ENCODE measurements at regions of chr16 and their contacts with region 1.

Region 1: DNA sequence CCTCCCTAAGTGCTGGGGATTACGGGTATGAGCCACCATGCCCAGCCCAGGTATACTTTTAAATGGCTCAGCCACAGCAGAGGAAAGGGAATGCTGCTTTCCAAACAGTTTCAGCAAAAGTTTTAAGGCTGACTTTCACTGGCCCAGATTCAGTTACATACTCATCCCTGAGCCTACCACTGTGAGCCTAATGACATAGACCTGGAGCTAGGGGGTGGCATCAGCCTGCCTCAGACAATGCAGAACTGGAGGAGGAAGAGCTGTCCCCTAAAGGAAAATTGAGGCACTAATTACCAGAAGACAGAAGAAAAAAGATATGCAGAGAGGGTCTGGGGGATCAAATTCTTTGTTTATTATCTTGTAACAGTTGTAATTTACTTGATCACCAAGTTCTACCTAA is 43.9 kb downstream of the HS3ST4 start:
- DNase-seq: no peak
- H3K4me3 ChIP-seq: no peak overlapping the region
- H3K27ac ChIP-seq: no peak overlapping the region
- H3K4me1 ChIP-seq: no peaks in the 10 kb centered on the region
- H3K27me3 ChIP-seq: no peaks in the 10 kb centered on the region
- CTCF ChIP-seq: no peak
- POLR2A ChIP-seq: no peak

Region 2: GRCh38 chr16:27566417-27566816 is 1830.8 kb after region 1 on chr16:
- intact Hi-C with region 1: loop called (anchors 5 kb)
- DNase-seq: no peak
- H3K4me3 ChIP-seq: no peak overlapping the region
- H3K27ac ChIP-seq: no peak overlapping the region
- H3K4me1 ChIP-seq: no peaks in the 10 kb centered on the region
- H3K27me3 ChIP-seq: no peaks in the 10 kb centered on the region
- CTCF ChIP-seq: no peak
- POLR2A ChIP-seq: no peak

Measured in breast epithelium (tissue), 4 donors.